Caco-2 (cell line): ENCODE measurements at regions of chr2 and their contacts with region 1.

Region 1: DNA sequence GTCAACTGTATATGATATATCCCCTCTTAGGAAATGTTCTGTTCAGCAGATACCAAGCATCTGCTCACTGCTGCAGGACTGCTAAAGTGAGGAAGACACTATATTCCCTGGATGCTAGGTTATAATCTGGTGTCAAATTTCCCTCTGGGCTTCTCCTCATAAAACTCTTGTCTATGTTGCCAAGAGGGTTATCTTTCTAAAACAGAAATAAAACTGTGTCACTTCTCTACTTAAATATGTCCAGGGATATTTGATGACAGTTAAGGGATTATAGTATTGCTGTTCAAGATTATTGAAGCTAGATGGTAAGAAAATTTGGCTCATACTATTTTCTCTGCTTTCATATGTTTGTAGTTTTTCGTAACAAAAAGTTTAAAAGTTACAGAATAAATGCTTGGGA is 30.5 kb upstream of the SNRNP27 start:
- DNase-seq: no peak
- H3K4me3 ChIP-seq: no peak overlapping the region
- H3K4me3 Mint-ChIP-seq: no peak overlapping the region
- H3K27ac Mint-ChIP-seq: no peak overlapping the region
- H3K4me1 ChIP-seq: no peaks in the 10 kb centered on the region
- H3K4me1 Mint-ChIP-seq: no peaks in the 10 kb centered on the region
- H3K27me3 ChIP-seq: no peaks in the 10 kb centered on the region
- H3K27me3 Mint-ChIP-seq: no peaks in the 10 kb centered on the region
- CTCF ChIP-seq: no peak

Region 2: DNA sequence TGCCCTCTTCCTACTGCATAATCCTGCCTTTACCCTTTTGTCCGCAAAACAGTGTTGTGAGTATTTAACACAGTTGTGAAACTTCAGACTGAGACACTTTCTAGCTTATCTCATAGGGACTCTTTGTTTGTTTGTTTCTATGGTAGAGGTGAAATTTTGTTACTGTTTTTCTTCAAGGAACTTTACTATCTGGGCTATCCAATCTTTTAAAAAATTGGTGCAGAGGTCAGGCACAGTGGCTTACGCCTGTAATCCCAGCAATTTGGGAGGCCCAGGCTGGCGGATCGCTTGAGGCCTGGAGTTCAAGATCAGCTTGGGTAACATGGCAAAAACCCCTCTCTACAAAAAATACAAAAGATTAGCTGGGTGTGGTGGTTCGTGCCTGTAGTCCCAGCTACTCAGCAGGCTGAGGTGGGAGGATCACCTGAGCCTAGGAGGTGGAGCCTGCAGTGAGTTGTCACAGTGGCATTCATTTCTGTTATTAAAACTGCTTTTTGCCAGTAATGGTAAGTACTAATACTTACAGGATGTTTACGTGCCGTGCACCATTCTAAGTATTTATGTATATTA is 15.0 kb before region 1 on chr2:
- CTCF ChIA-PET with region 1: no interaction called
- POLR2A ChIA-PET with region 1: no interaction called
- intact Hi-C with region 1: no loop called
- DNase-seq: no peak
- H3K4me3 ChIP-seq: no peak overlapping the region
- H3K4me3 Mint-ChIP-seq: no peak overlapping the region
- H3K27ac Mint-ChIP-seq: no peak overlapping the region
- H3K4me1 ChIP-seq: no peaks in the 10 kb centered on the region
- H3K4me1 Mint-ChIP-seq: no peaks in the 10 kb centered on the region
- H3K27me3 ChIP-seq: no peaks in the 10 kb centered on the region
- H3K27me3 Mint-ChIP-seq: no peaks in the 10 kb centered on the region
- CTCF ChIP-seq: no peak

Region 3: DNA sequence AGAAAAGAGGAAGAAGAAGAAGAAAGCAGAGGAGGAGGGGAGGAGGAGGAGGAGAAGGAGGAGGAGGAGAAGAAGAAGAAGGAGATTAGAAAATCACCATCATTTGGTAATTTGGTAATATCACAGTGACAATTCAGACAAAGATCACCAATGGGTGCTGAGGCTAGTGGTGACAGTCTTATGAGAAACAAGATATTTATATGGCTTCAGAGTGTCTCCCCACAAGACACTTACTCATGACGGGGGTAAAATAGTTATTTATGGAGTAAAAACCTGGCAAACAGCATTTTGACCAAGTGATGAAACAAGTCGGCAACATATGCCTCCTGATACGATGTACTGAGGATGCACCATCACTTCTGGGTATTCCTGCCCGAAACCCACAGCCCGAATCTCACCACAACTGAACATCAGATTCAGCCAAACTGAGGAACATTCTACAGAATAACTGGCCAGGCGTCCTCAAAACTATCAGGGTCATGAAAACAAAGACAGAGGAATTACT is 93.2 kb after region 1 on chr2:
- CTCF ChIA-PET with region 1: no interaction called
- POLR2A ChIA-PET with region 1: interaction called, 10 read pairs
- intact Hi-C with region 1: no loop called
- DNase-seq: no peak
- H3K4me3 ChIP-seq: no peak overlapping the region
- H3K4me3 Mint-ChIP-seq: no peak overlapping the region
- H3K27ac Mint-ChIP-seq: no peak overlapping the region
- H3K4me1 ChIP-seq: no peaks in the 10 kb centered on the region
- H3K4me1 Mint-ChIP-seq: no peaks in the 10 kb centered on the region
- H3K27me3 ChIP-seq: no peaks in the 10 kb centered on the region
- H3K27me3 Mint-ChIP-seq: peaks cover 3% of the 10 kb centered on the region
- CTCF ChIP-seq: no peak